ENCODE measurements at regions of chr10 and their contacts with region 1.

Region 1: GRCh38 chr10:50577681-50578350 is 45.9 kb downstream of the SGMS1 start:
- DNase-seq: peak; percentile 8
- H3K4me3 ChIP-seq: no peak overlapping the region
- H3K27ac ChIP-seq: no peak overlapping the region
- H3K4me1 ChIP-seq: peaks cover 14% of the 10 kb centered on the region
- CTCF ChIP-seq: no peak

Region 2: GRCh38 chr10:50431791-50432190 is 146.0 kb before region 1 on chr10:
- CTCF ChIA-PET with region 1: no interaction called
- POLR2A ChIA-PET with region 1: no interaction called
- intact Hi-C with region 1: no loop called
- DNase-seq: no peak
- H3K4me3 ChIP-seq: no peak overlapping the region
- H3K27ac ChIP-seq: no peak overlapping the region
- H3K4me1 ChIP-seq: no peaks in the 10 kb centered on the region
- CTCF ChIP-seq: no peak

Region 3: DNA sequence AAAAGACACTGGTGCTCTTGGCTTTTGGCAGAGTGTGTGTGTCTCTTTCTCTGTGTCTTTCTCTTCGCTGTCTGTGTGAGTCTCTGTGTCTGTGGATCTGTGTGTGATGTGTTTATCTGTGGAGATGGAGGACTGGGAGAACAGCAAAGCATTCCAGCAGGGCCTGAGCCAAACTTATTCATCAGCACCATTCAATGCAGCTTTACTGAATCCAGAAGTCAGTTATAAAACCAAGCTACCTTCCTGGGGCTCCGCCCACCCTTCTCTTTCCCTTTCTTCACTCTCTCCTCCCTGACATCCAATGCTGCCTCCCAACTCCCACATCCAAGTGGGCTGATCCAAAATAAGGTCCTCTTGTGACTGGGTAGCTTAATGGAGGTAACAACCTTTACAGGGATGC is 42.1 kb after region 1 on chr10:
- CTCF ChIA-PET with region 1: no interaction called
- POLR2A ChIA-PET with region 1: interaction called, 15 read pairs
- intact Hi-C with region 1: no loop called
- DNase-seq: no peak
- H3K4me3 ChIP-seq: peak overlapping the region; percentile 88
- H3K27ac ChIP-seq: peak overlapping the region; percentile 96
- H3K4me1 ChIP-seq: peaks cover 63% of the 10 kb centered on the region
- CTCF ChIP-seq: no peak

Region 4: DNA sequence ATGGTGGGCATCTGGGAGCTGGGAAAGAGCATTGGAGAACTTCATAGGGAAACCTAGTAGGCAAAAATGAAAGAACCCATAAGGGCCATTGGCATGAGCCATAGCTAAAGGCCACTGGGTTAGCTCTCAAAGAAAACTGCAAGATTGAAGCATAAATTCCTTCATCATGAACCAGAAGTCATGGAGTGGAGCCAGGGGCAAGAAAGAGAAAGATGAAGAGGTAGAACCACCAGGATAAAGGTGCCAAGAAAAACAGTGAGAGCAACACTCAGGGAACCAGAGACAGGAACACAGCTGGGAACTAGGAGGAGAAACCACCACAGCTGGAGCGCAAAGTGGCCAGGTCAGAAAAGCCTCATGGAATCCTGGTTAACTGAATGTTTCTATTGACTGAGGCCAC is 57.5 kb after region 1 on chr10:
- CTCF ChIA-PET with region 1: no interaction called
- POLR2A ChIA-PET with region 1: no interaction called
- intact Hi-C with region 1: no loop called
- DNase-seq: no peak
- H3K4me3 ChIP-seq: no peak overlapping the region
- H3K27ac ChIP-seq: no peak overlapping the region
- H3K4me1 ChIP-seq: peaks cover 13% of the 10 kb centered on the region
- CTCF ChIP-seq: no peak